Common myeloid progenitor, CD34-positive (primary cell): ENCODE measurements at regions of chr17 and their contacts with region 1.

Region 1: GRCh38 chr17:50501054-50501453 is 7.2 kb upstream of the MYCBPAP start:
- DNase-seq: peak; percentile 32 to 53 (median 49)
- H3K4me3 ChIP-seq: no peak overlapping the region
- H3K27ac ChIP-seq: no peak overlapping the region
- H3K4me1 ChIP-seq: peaks cover 0 to 8% (median 0%) of the 10 kb centered on the region in 4 experiments
- H3K27me3 ChIP-seq: no peaks in the 10 kb centered on the region

Region 2: GRCh38 chr17:50478391-50479381 is 22.4 kb before region 1 on chr17 and contains the start of gene RSAD1:
- CTCF ChIA-PET with region 1: interaction called, 17 read pairs
- POLR2A ChIA-PET with region 1: no interaction called
- DNase-seq: peak; percentile 93 to 96 (median 95)
- H3K4me3 ChIP-seq: peak within 1 kb of the TSS; percentile 86 to 94 (median 90)
- H3K27ac ChIP-seq: peak within 1 kb of the TSS; percentile 7 to 85
- H3K4me1 ChIP-seq: peaks cover 0 to 21% (median 18%) of the 10 kb centered on the region in 4 experiments
- H3K27me3 ChIP-seq: peaks cover 0 to 4% (median 0%) of the 10 kb centered on the region in 5 experiments

Region 3: GRCh38 chr17:50487213-50488096 is 13.6 kb before region 1 on chr17:
- CTCF ChIA-PET with region 1: interaction called, 17 read pairs
- POLR2A ChIA-PET with region 1: interaction called, 4 read pairs
- DNase-seq: no peak
- H3K4me3 ChIP-seq: no peak overlapping the region
- H3K27ac ChIP-seq: no peak overlapping the region
- H3K4me1 ChIP-seq: peaks cover 0 to 1% (median 0%) of the 10 kb centered on the region in 4 experiments
- H3K27me3 ChIP-seq: no peaks in the 10 kb centered on the region

Region 4: DNA sequence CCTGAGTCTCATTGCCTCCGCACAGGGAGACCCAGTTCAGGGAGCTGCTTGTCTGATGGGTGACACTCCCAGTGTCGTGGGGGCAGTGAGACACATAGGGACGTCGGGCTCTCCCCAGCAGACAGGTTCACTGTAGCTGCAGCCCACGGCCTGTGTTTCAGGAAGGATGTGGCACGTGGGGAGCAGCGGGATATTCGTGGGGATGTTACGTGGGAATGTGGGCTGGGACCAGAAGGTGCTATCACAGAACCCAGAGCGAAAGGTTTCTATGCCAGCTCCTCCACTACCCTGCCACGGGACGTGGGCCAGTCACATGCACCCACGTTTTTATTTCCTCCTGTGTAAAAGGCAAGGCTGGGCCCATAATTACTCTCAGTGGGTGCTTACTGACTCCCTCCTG is 75.8 kb after region 1 on chr17:
- CTCF ChIA-PET with region 1: no interaction called
- POLR2A ChIA-PET with region 1: no interaction called
- DNase-seq: no peak
- H3K4me3 ChIP-seq: no peak overlapping the region
- H3K27ac ChIP-seq: no peak overlapping the region
- H3K4me1 ChIP-seq: peaks cover 0 to 2% (median 0%) of the 10 kb centered on the region in 4 experiments
- H3K27me3 ChIP-seq: peaks cover 0 to 9% (median 2%) of the 10 kb centered on the region in 5 experiments